AG04450 (cell line): ENCODE measurements at regions of chr11 and their contacts with region 1.

Region 1: GRCh38 chr11:125404776-125405435 is 91.2 kb downstream of the FEZ1 start:
- DNase-seq: no peak
- H3K4me3 ChIP-seq: no peak overlapping the region
- H3K27ac ChIP-seq: no peak overlapping the region
- H3K27me3 ChIP-seq: peaks cover 22% of the 10 kb centered on the region
- CTCF ChIP-seq: peak; percentile 95

Region 2: GRCh38 chr11:125170510-125171031 is 234.3 kb before region 1 on chr11:
- CTCF ChIA-PET with region 1: interaction called, 15 read pairs
- POLR2A ChIA-PET with region 1: no interaction called
- DNase-seq: peak; percentile 84
- H3K4me3 ChIP-seq: 0 out of 2 replicates have a peak overlapping the region, but pooled peaks have one; percentile 27
- H3K27ac ChIP-seq: peak overlapping the region; percentile 93
- H3K27me3 ChIP-seq: peaks cover 21% of the 10 kb centered on the region
- CTCF ChIP-seq: no peak

Region 3: DNA sequence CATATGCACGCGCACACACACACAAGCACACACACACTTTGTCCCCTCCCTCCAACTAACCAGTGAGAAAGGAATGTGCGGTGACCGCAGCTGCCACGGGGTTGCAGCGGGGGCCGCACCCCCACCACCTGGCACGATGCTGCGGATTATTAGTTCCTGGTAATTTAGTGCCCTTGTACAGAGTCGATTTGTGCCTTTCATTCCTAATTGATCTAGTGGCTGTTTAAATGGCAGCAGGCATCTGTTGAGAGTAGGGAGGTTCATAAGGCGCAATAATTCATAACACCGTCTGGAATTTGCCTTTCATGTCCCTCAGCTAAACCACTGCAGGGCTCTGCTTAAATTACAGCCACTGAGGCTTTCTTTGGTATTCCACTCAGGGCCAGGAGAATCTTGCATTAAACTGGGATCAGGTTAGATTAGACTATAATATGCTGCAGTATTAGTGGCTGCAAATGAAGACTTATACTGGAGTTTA is 22.6 kb before region 1 on chr11:
- CTCF ChIA-PET with region 1: interaction called, 13 read pairs
- POLR2A ChIA-PET with region 1: no interaction called
- DNase-seq: no peak
- H3K4me3 ChIP-seq: no peak overlapping the region
- H3K27ac ChIP-seq: no peak overlapping the region
- H3K27me3 ChIP-seq: peaks cover 5% of the 10 kb centered on the region
- CTCF ChIP-seq: no peak

Region 4: GRCh38 chr11:125423247-125423849 is 18.4 kb after region 1 on chr11:
- CTCF ChIA-PET with region 1: interaction called, 11 read pairs
- POLR2A ChIA-PET with region 1: no interaction called
- DNase-seq: no peak
- H3K4me3 ChIP-seq: no peak overlapping the region
- H3K27ac ChIP-seq: no peak overlapping the region
- H3K27me3 ChIP-seq: peaks cover 18% of the 10 kb centered on the region
- CTCF ChIP-seq: peak; percentile 45